GM12878 (cell line): ENCODE measurements at regions of chr2 and their contacts with region 1.

Region 1: GRCh38 chr2:62099523-62100175 is 96.3 kb upstream of the B3GNT2 start:
- DNase-seq: peak; percentile 80
- ATAC-seq: peak; percentile 96
- H3K4me3 ChIP-seq: peak overlapping the region; percentile 53
- H3K27ac ChIP-seq: peak overlapping the region; percentile 95
- H3K4me1 ChIP-seq: peaks cover 43% of the 10 kb centered on the region
- H3K27me3 ChIP-seq: no peaks in the 10 kb centered on the region
- CTCF ChIP-seq: no peak
- EP300 ChIP-seq: peak; percentile 13 to 16; a peak in 1 of 4 replicates
- POLR2A ChIP-seq: no peak
- RAD21 ChIP-seq: no peak

Region 2: DNA sequence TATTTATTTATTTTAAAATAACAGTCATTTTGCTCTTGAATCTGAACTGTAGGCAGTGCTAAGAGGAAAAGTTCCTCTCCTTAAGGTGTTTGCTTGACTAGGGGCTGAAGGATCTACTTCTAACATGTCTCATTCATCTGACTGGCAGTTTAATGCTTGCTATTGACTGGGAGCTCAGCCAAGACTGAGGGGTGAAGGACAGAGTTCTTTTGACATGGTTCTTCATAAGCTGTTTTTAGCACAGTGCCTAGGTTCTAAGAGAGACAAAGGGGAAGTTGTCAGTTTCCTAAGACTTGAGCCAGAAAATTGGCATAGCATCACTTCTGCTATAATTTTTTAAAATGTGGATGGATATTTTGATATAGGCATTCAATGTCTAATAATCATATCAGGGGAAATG is 121.1 kb before region 1 on chr2:
- CTCF ChIA-PET with region 1: no interaction called
- POLR2A ChIA-PET with region 1: no interaction called
- RAD21 ChIA-PET with region 1: no interaction called
- SMC1A ChIA-PET with region 1: no interaction called
- in situ Hi-C with region 1: no loop called
- intact Hi-C with region 1: no loop called
- DNase-seq: peak; percentile 45
- ATAC-seq: peak; percentile 80
- H3K4me3 ChIP-seq: no peak overlapping the region
- H3K27ac ChIP-seq: 0 out of 2 replicates have a peak overlapping the region, but pooled peaks have one; percentile 13
- H3K4me1 ChIP-seq: peaks cover 10% of the 10 kb centered on the region
- H3K27me3 ChIP-seq: no peaks in the 10 kb centered on the region
- CTCF ChIP-seq: no peak
- EP300 ChIP-seq: no peak
- POLR2A ChIP-seq: no peak
- RAD21 ChIP-seq: no peak

Region 3: DNA sequence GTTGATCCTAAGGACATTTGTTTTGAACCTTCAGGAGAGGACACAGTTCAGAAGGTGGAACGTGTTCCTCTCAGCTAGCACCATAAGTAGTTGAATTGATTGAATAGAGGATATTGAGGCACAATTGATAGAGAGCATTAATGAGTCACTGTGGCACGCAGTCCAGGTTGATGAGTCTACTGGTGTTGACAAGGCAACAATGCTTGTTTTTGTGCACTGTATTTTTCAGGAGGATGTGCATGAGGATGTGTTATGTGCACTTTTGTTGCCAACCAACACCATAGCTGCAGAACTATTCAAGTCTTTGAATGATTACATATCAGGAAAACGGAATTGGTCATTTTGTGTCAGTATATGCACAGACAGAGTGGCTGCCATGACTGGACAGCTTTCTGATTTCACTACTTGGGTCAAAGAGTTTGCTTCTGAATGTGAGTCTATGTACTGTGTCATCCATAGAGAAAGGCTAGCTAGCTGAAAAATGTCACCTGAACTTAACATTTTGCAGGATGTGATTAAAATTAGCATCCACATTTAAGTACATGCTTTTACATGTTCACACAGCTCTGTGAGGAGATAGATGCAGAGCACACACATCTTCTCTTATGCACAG is 43.8 kb before region 1 on chr2:
- CTCF ChIA-PET with region 1: interaction called, 3 read pairs
- POLR2A ChIA-PET with region 1: no interaction called
- RAD21 ChIA-PET with region 1: interaction called, 20 read pairs
- SMC1A ChIA-PET with region 1: interaction called, 15 read pairs
- in situ Hi-C with region 1: no loop called
- intact Hi-C with region 1: no loop called
- DNase-seq: no peak
- ATAC-seq: peak; percentile 17; the same call in 2 of the 3 replicates
- H3K4me3 ChIP-seq: no peak overlapping the region
- H3K27ac ChIP-seq: no peak overlapping the region
- H3K4me1 ChIP-seq: peaks cover 18% of the 10 kb centered on the region
- H3K27me3 ChIP-seq: no peaks in the 10 kb centered on the region
- CTCF ChIP-seq: no peak
- EP300 ChIP-seq: no peak
- POLR2A ChIP-seq: no peak
- RAD21 ChIP-seq: no peak

Region 4: GRCh38 chr2:62112179-62112578 is 12.5 kb after region 1 on chr2:
- CTCF ChIA-PET with region 1: interaction called, 4 read pairs
- POLR2A ChIA-PET with region 1: interaction called, 6 read pairs
- RAD21 ChIA-PET with region 1: interaction called, 3 read pairs
- SMC1A ChIA-PET with region 1: interaction called, 26 read pairs
- in situ Hi-C with region 1: no loop called
- intact Hi-C with region 1: no loop called
- DNase-seq: no peak
- ATAC-seq: no peak
- H3K4me3 ChIP-seq: no peak overlapping the region
- H3K27ac ChIP-seq: no peak overlapping the region
- H3K4me1 ChIP-seq: peaks cover 17% of the 10 kb centered on the region
- H3K27me3 ChIP-seq: no peaks in the 10 kb centered on the region
- CTCF ChIP-seq: no peak
- EP300 ChIP-seq: no peak
- POLR2A ChIP-seq: no peak
- RAD21 ChIP-seq: no peak

Region 5: DNA sequence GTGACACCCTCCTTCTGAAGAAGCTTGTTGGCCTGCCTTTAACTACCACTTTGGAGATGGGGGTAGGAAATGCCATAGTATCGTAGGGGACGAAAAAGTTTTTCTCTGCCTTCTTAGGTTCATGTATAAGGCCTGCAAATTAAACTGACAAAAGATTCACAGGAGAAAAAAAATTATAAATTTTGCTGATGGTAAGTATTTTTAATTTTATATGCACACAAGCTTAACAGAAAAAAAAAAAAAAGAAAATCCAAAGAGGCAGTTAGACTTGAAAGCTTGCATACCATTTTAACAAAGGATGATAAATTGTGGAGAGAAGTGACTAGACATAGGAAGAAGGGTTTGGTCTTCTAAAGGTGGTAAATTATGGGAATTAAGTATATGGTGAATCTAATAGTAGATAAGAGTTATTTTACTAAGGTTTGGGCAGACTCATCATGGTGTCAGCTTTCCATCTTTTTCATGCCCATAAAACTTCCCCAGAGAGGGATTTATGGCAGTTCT is 33.7 kb after region 1 on chr2:
- CTCF ChIA-PET with region 1: interaction called, 5 read pairs
- POLR2A ChIA-PET with region 1: interaction called, 10 read pairs
- RAD21 ChIA-PET with region 1: interaction called, 9 read pairs
- SMC1A ChIA-PET with region 1: interaction called, 41 read pairs
- in situ Hi-C with region 1: no loop called
- intact Hi-C with region 1: no loop called
- DNase-seq: no peak
- ATAC-seq: no peak
- H3K4me3 ChIP-seq: no peak overlapping the region
- H3K27ac ChIP-seq: peak overlapping the region; percentile 41
- H3K4me1 ChIP-seq: peaks cover 44% of the 10 kb centered on the region
- H3K27me3 ChIP-seq: no peaks in the 10 kb centered on the region
- CTCF ChIP-seq: no peak
- EP300 ChIP-seq: no peak
- POLR2A ChIP-seq: no peak
- RAD21 ChIP-seq: no peak

Region 6: DNA sequence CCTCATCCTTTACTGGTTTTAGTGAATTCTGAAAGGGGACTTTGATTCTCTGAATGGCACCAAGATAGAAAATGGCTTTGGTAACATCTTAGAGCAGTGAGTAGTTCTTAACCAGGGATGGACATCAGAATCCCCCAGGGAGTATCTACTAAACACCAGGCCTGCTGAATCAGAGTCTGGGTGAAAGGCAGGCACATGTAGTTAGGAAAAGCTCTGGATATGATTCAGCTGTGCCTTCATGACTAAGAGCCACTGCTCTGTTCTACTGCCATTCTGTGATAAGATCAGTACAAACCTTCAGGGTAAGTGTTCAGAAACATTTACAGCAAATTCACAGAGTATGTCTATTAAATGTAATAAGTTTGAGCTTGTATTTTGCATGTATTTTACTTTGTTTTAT is 50.1 kb after region 1 on chr2:
- CTCF ChIA-PET with region 1: interaction called, 3 read pairs
- POLR2A ChIA-PET with region 1: interaction called, 4 read pairs
- RAD21 ChIA-PET with region 1: interaction called, 40 read pairs
- SMC1A ChIA-PET with region 1: interaction called, 59 read pairs
- in situ Hi-C with region 1: no loop called
- intact Hi-C with region 1: no loop called
- DNase-seq: no peak
- ATAC-seq: peak; percentile 23
- H3K4me3 ChIP-seq: no peak overlapping the region; the same call in 1 of the 2 replicates
- H3K27ac ChIP-seq: peak overlapping the region; percentile 91
- H3K4me1 ChIP-seq: peaks cover 43% of the 10 kb centered on the region
- H3K27me3 ChIP-seq: no peaks in the 10 kb centered on the region
- CTCF ChIP-seq: no peak
- EP300 ChIP-seq: no peak
- POLR2A ChIP-seq: no peak
- RAD21 ChIP-seq: no peak